GM12878 (cell line): ENCODE measurements at regions of chr6 and their contacts with region 1.

Region 1: DNA sequence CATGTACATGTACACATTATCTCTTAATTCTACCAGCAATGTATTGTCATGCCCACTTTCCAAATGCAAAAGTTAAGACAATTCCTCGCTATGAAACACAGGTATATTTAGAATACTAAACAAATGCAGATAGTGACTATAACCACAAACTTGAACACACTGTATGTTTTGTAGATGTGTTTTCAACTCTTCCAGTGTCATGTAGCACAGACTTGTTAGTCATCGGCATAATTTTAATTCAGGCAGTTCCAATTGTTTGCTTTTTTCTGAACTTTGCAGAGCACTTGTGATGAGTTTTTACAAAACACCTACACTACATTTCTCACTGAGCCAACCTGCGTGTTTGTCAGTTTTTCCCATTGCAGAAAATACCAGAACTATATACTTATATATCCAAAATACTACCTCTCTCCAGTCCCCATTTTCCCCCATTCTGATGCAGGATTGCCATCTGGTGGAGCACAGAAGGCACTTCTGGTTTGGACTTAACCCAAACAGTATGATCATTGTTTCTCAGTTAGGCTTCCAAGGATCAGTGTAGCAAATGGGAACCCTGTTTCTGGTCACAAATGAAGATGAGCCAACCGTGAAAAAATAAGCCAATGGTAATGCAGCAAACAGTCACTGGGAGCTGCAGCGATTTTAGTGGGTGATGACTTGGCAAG is 143.4 kb downstream of the ADGRB3 start:
- DNase-seq: no peak
- ATAC-seq: peak; percentile 66
- H3K4me3 ChIP-seq: no peak overlapping the region
- H3K27ac ChIP-seq: no peak overlapping the region
- H3K4me1 ChIP-seq: no peaks in the 10 kb centered on the region
- H3K27me3 ChIP-seq: no peaks in the 10 kb centered on the region
- CTCF ChIP-seq: peak; percentile 36 to 57 (median 40)
- EP300 ChIP-seq: no peak
- POLR2A ChIP-seq: no peak
- RAD21 ChIP-seq: peak; percentile 72

Region 2: GRCh38 chr6:68343901-68344300 is 434.6 kb before region 1 on chr6:
- CTCF ChIA-PET with region 1: interaction called, 6 read pairs
- POLR2A ChIA-PET with region 1: no interaction called
- RAD21 ChIA-PET with region 1: no interaction called
- SMC1A ChIA-PET with region 1: no interaction called
- in situ Hi-C with region 1: no loop called
- intact Hi-C with region 1: loop called (anchors 2 kb)
- DNase-seq: no peak
- ATAC-seq: peak; percentile 94
- H3K4me3 ChIP-seq: no peak overlapping the region
- H3K27ac ChIP-seq: no peak overlapping the region
- H3K4me1 ChIP-seq: no peaks in the 10 kb centered on the region
- H3K27me3 ChIP-seq: no peaks in the 10 kb centered on the region
- CTCF ChIP-seq: peak; percentile 42 to 59 (median 57); a peak in 4 of 6 replicates
- EP300 ChIP-seq: no peak
- POLR2A ChIP-seq: no peak
- RAD21 ChIP-seq: peak; percentile 51; the same call in 1 of the 2 replicates

Region 3: GRCh38 chr6:68634726-68635411 is 143.6 kb before region 1 on chr6 and contains the start of gene ADGRB3:
- CTCF ChIA-PET with region 1: interaction called, 64 read pairs
- POLR2A ChIA-PET with region 1: no interaction called
- RAD21 ChIA-PET with region 1: no interaction called
- SMC1A ChIA-PET with region 1: interaction called, 37 read pairs
- in situ Hi-C with region 1: no loop called
- intact Hi-C with region 1: loop called (anchors 2 kb)
- DNase-seq: no peak
- ATAC-seq: peak; percentile 75
- H3K4me3 ChIP-seq: peak within 1 kb of the TSS; percentile 67
- H3K27ac ChIP-seq: no peak within 1 kb of the TSS
- H3K4me1 ChIP-seq: no peaks in the 10 kb centered on the region
- H3K27me3 ChIP-seq: peaks cover 1 to 16% of the 10 kb centered on the region in 2 experiments
- CTCF ChIP-seq: no peak
- EP300 ChIP-seq: no peak
- POLR2A ChIP-seq: no peak
- RAD21 ChIP-seq: no peak
- polyA plus RNA-seq, gene ADGRB3: not detected

Region 4: DNA sequence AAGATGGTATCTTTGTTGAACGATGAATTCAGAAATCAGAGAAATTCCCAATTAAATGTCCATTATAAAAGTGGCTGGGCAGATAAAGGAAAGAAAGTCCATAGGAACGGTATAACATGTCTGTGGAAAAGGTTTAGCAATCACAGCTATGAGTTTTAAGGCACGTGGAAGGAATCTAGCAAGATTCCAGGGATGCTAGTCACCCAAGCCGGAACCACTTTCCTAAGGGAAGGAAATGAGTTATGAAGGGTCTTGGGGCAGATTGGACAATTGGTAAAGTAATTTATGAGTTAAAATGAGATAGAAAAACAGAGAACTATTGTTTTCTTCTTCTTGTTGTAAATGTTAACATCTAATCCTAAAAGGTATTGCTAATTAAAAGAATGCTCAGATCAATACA is 241.3 kb after region 1 on chr6:
- CTCF ChIA-PET with region 1: no interaction called
- POLR2A ChIA-PET with region 1: no interaction called
- RAD21 ChIA-PET with region 1: no interaction called
- SMC1A ChIA-PET with region 1: no interaction called
- in situ Hi-C with region 1: no loop called
- intact Hi-C with region 1: no loop called
- DNase-seq: no peak
- ATAC-seq: no peak
- H3K4me3 ChIP-seq: no peak overlapping the region
- H3K27ac ChIP-seq: no peak overlapping the region
- H3K4me1 ChIP-seq: no peaks in the 10 kb centered on the region
- H3K27me3 ChIP-seq: no peaks in the 10 kb centered on the region
- CTCF ChIP-seq: no peak
- EP300 ChIP-seq: no peak
- POLR2A ChIP-seq: no peak
- RAD21 ChIP-seq: no peak